Pancreas (tissue), 10 donors: ENCODE measurements at regions of chr14 and their contacts with region 1.

Region 1: GRCh38 chr14:34496679-34497513 is 34.9 kb upstream of the SPTSSA start:
- DNase-seq: peak in 3 of 6 donors; percentile 11 to 40 (median 13)
- ATAC-seq: peak; percentile 17 to 77 (median 66)
- H3K4me3 ChIP-seq: no peak overlapping the region
- H3K27ac ChIP-seq: peak overlapping the region in 2 of 4 donors; percentile 23 to 37
- H3K4me1 ChIP-seq: no peaks in the 10 kb centered on the region
- H3K27me3 ChIP-seq: no peaks in the 10 kb centered on the region
- CTCF ChIP-seq: no peak

Region 2: DNA sequence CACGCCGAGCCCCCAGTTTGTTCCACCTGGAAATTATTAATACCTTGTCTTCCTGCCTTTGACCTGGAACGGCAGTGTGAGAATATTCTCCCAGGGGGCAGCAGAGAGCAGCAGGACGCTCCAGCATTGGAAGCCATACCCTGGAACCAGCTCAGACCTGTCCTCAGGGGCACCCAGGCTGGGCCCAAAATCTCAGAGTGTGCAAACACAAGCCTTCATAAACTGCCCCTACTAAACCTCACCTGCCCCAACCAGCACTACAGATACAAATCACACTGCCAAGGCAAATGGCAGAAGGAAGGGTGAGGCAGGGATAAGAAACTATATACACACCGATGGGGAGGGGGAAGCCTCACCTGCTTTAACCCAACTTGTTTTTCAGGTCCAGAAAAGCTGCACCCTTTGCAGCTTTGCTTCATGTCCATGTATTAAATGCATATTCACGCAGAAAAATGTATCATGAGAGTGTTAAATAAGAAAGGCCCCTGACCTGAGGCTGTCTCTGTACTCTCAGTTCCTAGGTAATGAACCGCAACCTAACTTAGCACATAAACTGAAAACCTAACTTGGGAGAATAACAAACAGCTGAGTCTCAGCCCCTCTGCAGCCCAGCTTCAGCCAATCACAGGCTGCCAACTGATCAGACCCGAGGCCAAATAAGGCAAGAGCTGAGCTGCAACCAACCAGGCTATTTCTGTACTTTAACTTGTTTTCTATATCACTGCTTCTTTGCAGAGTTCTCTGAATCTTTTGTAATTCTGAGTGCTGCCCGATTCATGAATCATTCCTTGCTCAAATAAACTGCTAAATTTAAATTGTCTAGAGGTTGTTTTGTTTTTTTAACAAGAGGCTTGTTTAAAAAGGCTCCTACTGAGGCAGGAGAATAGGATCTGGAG is 164.9 kb before region 1 on chr14:
- intact Hi-C with region 1: loop called in 1 of 3 experiments (anchors 10 kb)
- DNase-seq: peak; percentile 30 to 82 (median 64)
- ATAC-seq: peak; percentile 87 to 99 (median 95)
- H3K4me3 ChIP-seq: no peak overlapping the region
- H3K27ac ChIP-seq: no peak overlapping the region
- H3K4me1 ChIP-seq: no peaks in the 10 kb centered on the region
- H3K27me3 ChIP-seq: no peaks in the 10 kb centered on the region
- CTCF ChIP-seq: peak; percentile 49 to 88 (median 76)

Region 3: DNA sequence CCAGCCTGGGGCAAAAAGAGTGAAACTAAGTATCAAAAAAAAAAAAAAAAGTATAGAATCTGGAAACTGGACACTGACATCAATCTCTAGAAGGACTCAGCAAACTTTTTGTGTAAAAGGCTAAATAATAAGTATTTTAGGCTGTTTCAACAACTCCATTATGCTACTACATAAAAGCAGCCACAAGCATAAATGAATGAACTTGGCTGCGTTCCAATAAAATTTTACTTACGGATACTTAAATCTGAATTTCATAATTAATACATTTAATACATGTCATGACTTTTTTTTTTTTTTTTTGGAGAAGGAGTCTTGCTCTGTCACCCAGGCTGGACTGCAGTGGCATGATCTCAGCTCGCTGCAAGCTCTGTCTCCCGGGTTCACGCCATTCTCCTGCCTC is 67.9 kb after region 1 on chr14:
- intact Hi-C with region 1: no loop called
- DNase-seq: peak in 1 of 6 donors; percentile 5
- ATAC-seq: no peak
- H3K4me3 ChIP-seq: no peak overlapping the region
- H3K27ac ChIP-seq: no peak overlapping the region
- H3K4me1 ChIP-seq: no peaks in the 10 kb centered on the region
- H3K27me3 ChIP-seq: no peaks in the 10 kb centered on the region
- CTCF ChIP-seq: no peak

Region 4: DNA sequence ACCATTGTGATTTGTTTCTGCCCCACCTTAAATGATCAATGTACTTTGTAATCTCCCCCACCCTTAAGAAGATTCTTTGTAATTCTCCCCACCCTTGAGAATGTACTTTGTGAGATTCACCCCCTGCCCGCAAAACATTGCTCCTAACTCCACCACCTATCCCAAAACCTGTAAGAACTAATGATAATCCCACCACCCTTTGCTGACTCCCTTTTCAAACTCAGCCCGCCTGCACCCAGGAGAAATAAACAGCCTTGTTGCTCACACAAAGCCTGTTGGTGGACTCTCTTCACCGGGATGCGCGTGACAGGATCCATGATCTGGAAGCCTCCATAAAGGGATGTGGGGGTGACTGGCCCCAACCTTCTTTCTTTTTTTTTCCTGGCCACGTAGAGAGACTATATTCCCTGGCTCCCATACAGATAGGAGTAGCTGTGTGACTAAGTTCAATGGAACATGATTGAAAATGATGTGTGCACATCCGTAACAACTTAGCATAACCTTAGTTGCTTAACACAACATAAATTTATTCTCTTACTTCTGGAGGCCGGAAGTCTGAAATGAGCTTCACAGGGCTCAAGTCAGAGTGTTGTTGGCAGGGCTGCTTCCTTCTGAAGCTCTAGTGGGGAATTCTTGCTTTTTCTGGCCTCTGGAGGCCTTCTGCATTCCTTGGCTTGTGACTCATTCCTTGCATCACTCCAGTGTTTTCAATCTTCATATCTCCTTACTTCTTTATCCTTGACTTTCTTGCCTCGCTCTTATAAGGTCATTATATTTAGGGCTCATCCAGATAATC is 153.7 kb after region 1 on chr14:
- intact Hi-C with region 1: no loop called
- DNase-seq: no peak
- ATAC-seq: peak in 3 of 4 donors; percentile 29 to 86 (median 73)
- H3K4me3 ChIP-seq: no peak overlapping the region
- H3K27ac ChIP-seq: no peak overlapping the region
- H3K4me1 ChIP-seq: no peaks in the 10 kb centered on the region
- H3K27me3 ChIP-seq: no peaks in the 10 kb centered on the region
- CTCF ChIP-seq: no peak